Right ventricle myocardium inferior (tissue), 1 donor: ENCODE measurements at regions of chr12 and their contacts with region 1.

Region 1: DNA sequence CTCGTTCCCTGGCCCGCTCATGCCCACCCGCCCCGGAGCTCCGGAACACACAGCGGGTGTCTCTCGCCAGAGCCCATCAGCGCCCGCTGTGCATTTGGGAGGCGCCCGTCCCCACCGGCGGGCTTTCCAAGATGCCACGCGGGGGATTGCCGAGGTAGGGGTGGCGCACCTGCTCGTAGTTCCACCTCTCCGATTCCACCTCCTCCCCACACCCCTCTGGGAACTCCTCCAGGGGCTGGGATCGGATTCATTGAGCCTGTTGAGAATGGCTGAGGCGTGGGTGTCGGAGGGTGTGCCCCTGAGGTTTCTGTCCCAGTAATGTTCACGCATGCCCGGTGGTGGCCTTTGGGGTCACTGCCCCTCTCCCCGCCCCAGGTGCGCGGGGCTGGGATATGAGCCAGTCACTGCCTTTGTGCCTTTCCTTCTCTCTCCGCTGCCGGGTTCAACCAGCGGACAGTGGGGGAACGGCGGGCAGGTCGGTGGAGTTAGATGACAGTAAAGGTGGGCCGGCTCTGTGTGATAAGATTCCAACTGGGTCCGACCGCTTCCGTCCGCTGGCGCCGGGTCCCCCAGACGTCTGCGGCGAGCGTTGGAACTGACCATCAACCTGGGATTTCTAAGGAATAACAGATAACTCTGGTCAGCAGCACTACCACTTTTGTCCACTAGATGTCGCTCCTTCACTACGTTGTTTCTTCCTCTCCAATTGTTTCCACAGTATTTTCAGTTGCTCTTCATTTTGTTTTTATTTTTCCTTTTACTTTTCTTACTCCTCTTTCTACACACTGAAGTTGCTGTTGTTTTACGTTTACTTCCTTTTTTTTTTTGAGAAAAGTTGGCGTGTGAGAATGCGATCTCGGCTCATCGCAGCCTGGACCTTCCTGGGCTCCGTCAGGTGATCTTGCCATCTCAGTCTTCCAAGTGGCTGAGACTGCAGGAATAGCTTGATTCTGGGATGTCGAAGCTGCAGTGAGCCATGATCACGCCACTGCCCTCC is 178.1 kb upstream of the ALG10B start:
- DNase-seq: no peak
- ATAC-seq: peak; percentile 44

Region 2: DNA sequence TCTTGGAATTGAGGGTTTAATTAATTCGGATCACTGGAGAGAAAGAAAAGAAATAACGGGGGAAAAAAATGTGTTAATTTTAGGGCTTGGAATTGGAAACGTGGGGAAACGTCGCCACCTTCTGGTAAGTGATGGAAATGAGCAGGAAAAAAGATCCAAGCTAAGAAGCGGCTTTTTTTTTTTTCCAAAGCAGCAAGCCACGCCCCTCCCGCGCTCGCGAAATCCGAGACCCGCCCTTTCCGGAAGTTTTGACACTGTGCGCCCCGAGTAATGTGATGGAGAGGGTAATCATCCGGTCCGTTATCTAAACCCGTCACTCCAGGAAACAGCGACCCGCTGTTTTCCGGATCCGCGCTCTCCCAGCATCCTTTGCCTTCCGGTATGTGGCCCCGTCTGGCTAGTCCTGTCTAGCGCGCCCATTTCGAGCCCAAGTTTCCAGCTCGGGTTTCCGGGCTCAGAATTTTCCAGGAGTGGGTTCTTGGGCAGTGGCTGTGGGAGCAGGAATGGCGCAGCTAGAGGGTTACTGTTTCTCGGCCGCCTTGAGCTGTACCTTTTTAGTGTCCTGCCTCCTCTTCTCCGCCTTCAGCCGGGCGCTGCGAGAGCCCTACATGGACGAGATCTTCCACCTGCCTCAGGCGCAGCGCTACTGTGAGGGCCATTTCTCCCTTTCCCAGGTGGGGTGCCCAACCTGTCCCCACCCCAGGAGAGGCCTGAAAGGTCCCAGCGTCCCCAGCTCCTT is 178.0 kb after region 1 on chr12 and contains the start of gene ALG10B:
- intact Hi-C with region 1: loop called (anchors 1 kb)
- DNase-seq: peak; percentile 94
- ATAC-seq: peak; percentile 100
- total RNA-seq, gene ALG10B: 6.7 TPM